ENCODE measurements at regions of chr15 and their contacts with region 1.

Region 1: GRCh38 chr15:98647774-98648653 is at the start of gene IGF1R:
- DNase-seq: peak; percentile 88
- ATAC-seq: peak; percentile 79
- H3K4me3 ChIP-seq: peak within 1 kb of the TSS; percentile 85
- H3K27ac ChIP-seq: peak within 1 kb of the TSS; percentile 78
- H3K4me1 ChIP-seq: 0 out of 2 replicates have a peak, but pooled peaks cover 2% of the 10 kb centered on the region
- H3K27me3 ChIP-seq: peaks cover 19% of the 10 kb centered on the region
- CTCF ChIP-seq: no peak
- POLR2A ChIP-seq: no peak
- RAD21 ChIP-seq: no peak
- total RNA-seq, gene IGF1R: 24.9 and 26.7 TPM in 2 replicates

Region 2: GRCh38 chr15:98518823-98519561 is 129.0 kb before region 1 on chr15:
- CTCF ChIA-PET with region 1: interaction called, 31 read pairs
- POLR2A ChIA-PET with region 1: no interaction called
- dilution Hi-C with region 1: no loop called
- in situ Hi-C with region 1: loop called (anchors 5 kb)
- intact Hi-C with region 1: loop called (anchors 1 kb)
- DNase-seq: peak; percentile 76
- ATAC-seq: peak; percentile 94
- H3K4me3 ChIP-seq: no peak overlapping the region
- H3K27ac ChIP-seq: no peak overlapping the region
- H3K4me1 ChIP-seq: no peaks in the 10 kb centered on the region
- H3K27me3 ChIP-seq: peaks cover 4% of the 10 kb centered on the region
- CTCF ChIP-seq: peak; percentile 76
- POLR2A ChIP-seq: no peak
- RAD21 ChIP-seq: peak; percentile 80

Region 3: GRCh38 chr15:98727115-98728085 is 79.4 kb after region 1 on chr15:
- CTCF ChIA-PET with region 1: no interaction called
- POLR2A ChIA-PET with region 1: no interaction called
- dilution Hi-C with region 1: no loop called
- in situ Hi-C with region 1: no loop called
- intact Hi-C with region 1: loop called (anchors 5 kb)
- DNase-seq: peak; percentile 93
- ATAC-seq: peak; percentile 98
- H3K4me3 ChIP-seq: peak overlapping the region; percentile 16; the same call in 1 of the 2 replicates
- H3K27ac ChIP-seq: peak overlapping the region; percentile 98
- H3K4me1 ChIP-seq: peaks cover 32% of the 10 kb centered on the region
- H3K27me3 ChIP-seq: no peaks in the 10 kb centered on the region
- CTCF ChIP-seq: no peak
- POLR2A ChIP-seq: no peak
- RAD21 ChIP-seq: no peak

Region 4: DNA sequence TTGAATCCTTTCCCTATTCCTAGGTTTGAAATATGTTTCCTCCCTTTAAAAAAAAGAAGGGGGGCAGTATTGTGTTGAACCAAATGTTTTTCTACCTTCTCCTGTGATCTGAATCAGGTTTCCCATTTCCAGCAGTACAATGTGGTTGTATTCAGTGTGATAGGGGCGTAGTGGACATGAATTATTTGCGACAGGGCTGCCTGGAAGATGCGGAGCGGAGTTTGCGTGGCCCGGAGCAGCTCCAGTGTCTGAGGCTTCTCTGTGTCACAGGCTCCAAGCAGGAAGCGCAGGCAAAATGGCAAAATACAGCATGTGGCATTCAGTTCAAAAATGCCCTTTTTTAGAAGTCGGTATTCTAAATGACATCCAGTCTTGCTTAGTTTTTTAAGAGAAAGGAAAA is 205.1 kb after region 1 on chr15:
- CTCF ChIA-PET with region 1: interaction called, 3 read pairs
- POLR2A ChIA-PET with region 1: interaction called, 4 read pairs
- dilution Hi-C with region 1: no loop called
- in situ Hi-C with region 1: no loop called
- intact Hi-C with region 1: loop called (anchors 1 kb)
- DNase-seq: peak; percentile 93
- ATAC-seq: peak; percentile 47
- H3K4me3 ChIP-seq: peak overlapping the region; percentile 61
- H3K27ac ChIP-seq: peak overlapping the region; percentile 70; the same call in 1 of the 2 replicates
- H3K4me1 ChIP-seq: peaks cover 40% of the 10 kb centered on the region
- H3K27me3 ChIP-seq: no peaks in the 10 kb centered on the region
- CTCF ChIP-seq: 0 out of 2 replicates have a peak, but pooled peaks have one; percentile 6
- POLR2A ChIP-seq: no peak; the same call in 1 of the 2 replicates
- RAD21 ChIP-seq: peak; percentile 39; the same call in 1 of the 2 replicates

Region 5: DNA sequence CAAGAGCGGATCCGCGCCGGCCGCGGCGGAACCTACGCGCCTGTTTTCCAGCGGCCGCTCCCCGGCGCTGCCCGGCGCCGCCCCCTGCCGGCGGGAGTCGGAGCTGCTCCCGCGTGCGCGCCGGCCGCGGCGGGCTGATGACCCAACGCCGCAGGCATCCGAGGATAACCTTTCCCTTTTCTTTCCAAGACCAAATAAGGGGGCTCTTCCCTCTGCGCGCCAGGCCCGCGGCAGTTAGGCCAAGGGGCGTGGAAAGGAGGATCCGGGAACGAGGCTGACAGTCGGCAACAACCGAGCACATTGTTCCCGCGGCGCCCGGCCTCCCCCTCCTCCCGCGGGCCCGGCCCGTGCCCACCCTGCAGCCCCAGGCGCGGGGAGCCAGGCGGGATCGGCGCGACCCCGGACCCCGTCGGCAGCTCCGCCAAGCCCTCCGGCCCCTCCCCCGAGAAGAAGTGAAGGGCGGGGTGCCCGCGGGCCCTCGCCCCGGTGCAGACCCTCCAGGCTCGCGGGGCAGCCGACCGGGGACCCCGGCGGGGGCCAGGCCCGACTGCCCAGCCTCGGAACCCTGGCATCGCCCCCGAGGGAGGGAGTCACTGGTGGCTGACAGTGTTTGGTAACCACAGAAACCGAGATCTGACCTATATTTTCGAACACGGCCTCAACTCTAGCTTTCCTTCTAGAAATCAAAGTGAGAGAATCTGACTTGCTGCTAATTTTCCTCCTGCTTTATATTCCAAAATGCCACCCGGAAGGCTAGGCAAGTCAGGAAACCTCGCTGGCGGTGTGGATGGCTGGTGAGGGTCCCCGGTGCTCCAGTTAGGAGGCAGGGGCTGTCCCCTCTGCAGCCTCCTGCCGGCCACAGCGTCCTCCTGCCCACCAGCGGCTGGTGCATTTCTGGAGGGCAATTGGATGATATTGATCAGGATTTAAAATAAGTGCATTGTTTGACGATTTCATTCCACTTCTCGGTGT is 411.3 kb after region 1 on chr15:
- CTCF ChIA-PET with region 1: no interaction called
- POLR2A ChIA-PET with region 1: no interaction called
- dilution Hi-C with region 1: no loop called
- in situ Hi-C with region 1: no loop called
- intact Hi-C with region 1: loop called (anchors 1 kb)
- DNase-seq: peak; percentile 87
- ATAC-seq: peak; percentile 99
- H3K4me3 ChIP-seq: peak overlapping the region; percentile 47
- H3K27ac ChIP-seq: peak overlapping the region; percentile 82
- H3K4me1 ChIP-seq: peaks cover 3% of the 10 kb centered on the region
- H3K27me3 ChIP-seq: no peaks in the 10 kb centered on the region
- CTCF ChIP-seq: peak; percentile 96
- POLR2A ChIP-seq: peak; percentile 58
- RAD21 ChIP-seq: peak; percentile 84

Measured in IMR-90 (cell line).